ENCODE measurements at regions of chr20 and their contacts with region 1.

Region 1: GRCh38 chr20:35954200-35954906 is at the start of gene SCAND1:
- DNase-seq: peak; percentile 99
- ATAC-seq: peak; percentile 88
- H3K4me3 ChIP-seq: peak within 1 kb of the TSS; percentile 95
- H3K27ac ChIP-seq: peak within 1 kb of the TSS; percentile 93
- H3K4me1 ChIP-seq: peaks cover 13% of the 10 kb centered on the region
- H3K27me3 ChIP-seq: no peaks in the 10 kb centered on the region
- CTCF ChIP-seq: peak; percentile 94
- total RNA-seq, gene SCAND1: 90.9 and 101 TPM in 2 replicates

Region 2: DNA sequence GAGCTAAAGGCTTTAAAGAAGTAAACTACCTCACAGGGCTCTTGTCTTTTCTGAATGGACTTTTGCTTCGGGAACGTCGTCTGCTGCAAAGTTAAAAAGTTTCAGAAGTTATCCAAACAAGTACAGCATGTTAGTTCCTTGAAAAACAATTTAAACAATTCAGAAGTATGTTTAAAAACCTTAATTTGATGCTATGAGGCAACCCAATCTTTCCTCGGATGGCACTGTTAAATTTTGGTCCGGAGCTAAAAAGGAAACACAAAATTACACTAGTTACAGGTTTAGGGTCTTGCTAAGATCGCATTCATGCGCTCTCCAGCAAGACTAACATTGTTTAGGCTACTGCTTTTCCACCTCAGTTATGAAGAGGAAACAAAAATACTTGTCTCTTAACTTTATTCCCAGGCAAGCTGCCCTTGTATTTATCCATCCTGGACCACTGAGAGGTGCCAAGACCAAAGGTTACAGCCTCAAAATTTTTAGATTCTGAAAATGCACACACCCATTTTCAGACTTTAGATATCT is 225.0 kb before region 1 on chr20:
- CTCF ChIA-PET with region 1: no interaction called
- POLR2A ChIA-PET with region 1: interaction called, 14 read pairs
- intact Hi-C with region 1: no loop called
- DNase-seq: no peak
- ATAC-seq: no peak
- H3K4me3 ChIP-seq: no peak overlapping the region
- H3K27ac ChIP-seq: no peak overlapping the region
- H3K4me1 ChIP-seq: no peaks in the 10 kb centered on the region
- H3K27me3 ChIP-seq: no peaks in the 10 kb centered on the region
- CTCF ChIP-seq: no peak

Region 3: GRCh38 chr20:35757098-35757705 is 197.2 kb before region 1 on chr20:
- CTCF ChIA-PET with region 1: no interaction called
- POLR2A ChIA-PET with region 1: no interaction called
- intact Hi-C with region 1: no loop called
- DNase-seq: no peak
- ATAC-seq: 0 out of 2 replicates have a peak, but pooled peaks have one; percentile 24
- H3K4me3 ChIP-seq: no peak overlapping the region
- H3K27ac ChIP-seq: no peak overlapping the region
- H3K4me1 ChIP-seq: no peaks in the 10 kb centered on the region
- H3K27me3 ChIP-seq: no peaks in the 10 kb centered on the region
- CTCF ChIP-seq: no peak

Region 4: DNA sequence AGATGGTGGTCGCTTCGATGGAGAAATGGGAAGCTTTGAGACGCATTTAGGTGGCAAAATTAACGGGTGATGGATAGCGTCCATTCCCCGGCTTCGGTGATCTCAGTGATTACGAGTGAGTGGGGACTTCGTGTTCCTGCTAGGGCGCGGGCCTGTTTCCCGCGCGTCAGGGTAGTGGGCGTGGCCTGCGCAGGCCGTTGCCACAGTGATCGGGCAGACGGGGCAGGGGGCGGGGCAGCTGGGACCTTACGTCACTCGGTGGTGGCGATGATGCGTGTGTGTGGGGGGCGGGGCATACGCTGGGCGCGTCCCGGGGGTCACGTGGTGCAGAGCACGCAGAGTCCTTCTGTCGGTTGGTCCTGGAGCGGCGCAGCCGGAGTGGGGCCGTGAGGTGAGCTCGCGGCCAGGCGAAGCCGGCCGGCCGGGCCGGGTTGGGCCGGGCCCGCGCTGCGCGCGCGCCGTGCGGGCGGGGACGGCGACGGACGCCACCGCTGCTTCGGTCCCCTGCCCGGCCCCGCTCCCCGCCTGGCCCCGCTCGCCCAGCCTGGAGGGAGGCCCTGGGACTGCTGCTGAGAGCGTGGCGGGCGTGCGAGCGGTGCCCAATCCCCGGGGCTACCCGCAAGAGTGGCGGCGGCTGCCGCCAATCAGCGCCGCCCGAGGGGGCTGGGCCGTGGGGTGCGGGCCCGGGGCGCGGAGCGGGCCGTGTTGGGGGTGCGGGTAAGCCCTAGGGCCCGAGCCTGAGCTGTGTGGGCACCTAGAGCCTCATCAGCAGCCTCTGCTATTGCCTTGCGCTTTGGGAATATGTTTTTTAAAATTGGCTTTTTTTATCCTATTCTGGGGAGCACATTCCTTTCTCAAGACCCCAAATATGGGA is 182.4 kb before region 1 on chr20 and contains the start of gene PHF20:
- CTCF ChIA-PET with region 1: no interaction called
- POLR2A ChIA-PET with region 1: no interaction called
- intact Hi-C with region 1: loop called (anchors 2 kb)
- DNase-seq: peak; percentile 93
- ATAC-seq: peak; percentile 93
- H3K4me3 ChIP-seq: peak within 1 kb of the TSS; percentile 88
- H3K27ac ChIP-seq: no peak within 1 kb of the TSS; the same call in 1 of the 2 replicates
- H3K4me1 ChIP-seq: peaks cover 33% of the 10 kb centered on the region
- H3K27me3 ChIP-seq: no peaks in the 10 kb centered on the region
- CTCF ChIP-seq: no peak
- total RNA-seq, gene PHF20: 37.2 and 56.3 TPM in 2 replicates

Region 5: GRCh38 chr20:35981969-35982368 is 27.6 kb after region 1 on chr20:
- CTCF ChIA-PET with region 1: no interaction called
- POLR2A ChIA-PET with region 1: no interaction called
- intact Hi-C with region 1: no loop called
- DNase-seq: no peak
- ATAC-seq: no peak
- H3K4me3 ChIP-seq: no peak overlapping the region
- H3K27ac ChIP-seq: no peak overlapping the region
- H3K4me1 ChIP-seq: peaks cover 12% of the 10 kb centered on the region
- H3K27me3 ChIP-seq: no peaks in the 10 kb centered on the region
- CTCF ChIP-seq: no peak

Region 6: GRCh38 chr20:36214684-36215256 is 260.4 kb after region 1 on chr20:
- CTCF ChIA-PET with region 1: no interaction called
- POLR2A ChIA-PET with region 1: interaction called, 17 read pairs
- intact Hi-C with region 1: no loop called
- DNase-seq: peak; percentile 52
- ATAC-seq: peak; percentile 68
- H3K4me3 ChIP-seq: no peak overlapping the region
- H3K27ac ChIP-seq: no peak overlapping the region
- H3K4me1 ChIP-seq: no peaks in the 10 kb centered on the region
- H3K27me3 ChIP-seq: no peaks in the 10 kb centered on the region
- CTCF ChIP-seq: peak; percentile 77

Measured in PC-3 (cell line).